H1 (cell line): ENCODE measurements at regions of chr3 and their contacts with region 1.

Region 1: DNA sequence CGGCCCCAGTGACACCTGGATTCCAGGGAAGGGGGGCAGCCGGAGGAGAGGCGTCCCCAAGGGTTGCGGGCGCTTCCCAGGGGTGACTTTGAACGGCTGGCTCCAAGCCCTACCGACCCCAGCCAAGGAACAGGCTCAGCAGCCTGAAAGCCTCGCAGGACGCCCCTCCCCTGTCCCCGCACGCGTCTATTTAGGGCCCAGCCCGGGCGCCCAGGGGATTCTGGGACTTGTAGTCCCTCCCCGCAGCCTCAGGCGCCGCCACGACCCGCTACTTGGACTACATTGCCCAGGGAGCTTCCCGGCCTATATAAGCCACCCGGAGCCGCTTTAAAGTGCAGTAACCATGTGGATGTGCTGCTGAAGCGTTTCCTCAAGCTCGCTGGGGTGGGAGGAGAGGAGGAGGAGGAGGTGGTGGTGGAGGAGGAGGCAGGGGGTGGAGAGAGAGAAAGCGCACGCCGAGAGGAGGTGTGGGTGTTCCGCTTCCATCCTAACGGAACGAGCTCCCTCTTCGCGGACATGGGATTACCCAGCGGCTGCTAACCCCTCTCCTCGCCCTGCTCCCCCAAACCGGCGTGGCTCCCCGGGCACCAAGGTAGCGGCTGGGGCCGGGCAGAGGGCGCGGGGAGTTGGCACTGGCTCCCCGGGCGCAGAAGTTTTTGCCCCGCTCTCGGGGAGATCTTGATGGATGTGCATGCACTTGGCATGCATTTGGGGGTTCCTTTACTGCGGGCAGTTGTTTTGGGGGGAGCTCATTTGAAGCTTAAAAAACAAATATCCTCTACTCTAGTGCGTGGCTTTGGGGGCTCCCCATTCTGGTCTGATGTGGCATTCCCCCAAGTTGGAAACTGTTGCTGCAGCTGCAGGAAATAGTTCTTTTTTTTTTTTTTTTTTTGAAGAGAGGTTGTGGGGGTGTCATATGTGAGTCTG is at the start of gene ITPR1:
- DNase-seq: peak; percentile 98 to 99
- H3K4me3 ChIP-seq: peak within 1 kb of the TSS; percentile 62 to 88 (median 72)
- H3K27ac ChIP-seq: peak within 1 kb of the TSS; percentile 56; the same call in 1 of the 2 replicates
- H3K4me1 ChIP-seq: peaks cover 0 to 3% (median 0%) of the 10 kb centered on the region in 4 experiments; a peak in 3 of 7 replicates
- H3K27me3 ChIP-seq: peaks cover 0 to 11% (median 5%) of the 10 kb centered on the region in 4 experiments; a peak in 5 of 7 replicates
- CTCF ChIP-seq: no peak
- EP300 ChIP-seq: no peak
- POLR2A ChIP-seq: peak; percentile 100
- RAD21 ChIP-seq: no peak
- total RNA-seq, gene ITPR1: 11.5 and 16.3 TPM in 2 replicates

Region 2: DNA sequence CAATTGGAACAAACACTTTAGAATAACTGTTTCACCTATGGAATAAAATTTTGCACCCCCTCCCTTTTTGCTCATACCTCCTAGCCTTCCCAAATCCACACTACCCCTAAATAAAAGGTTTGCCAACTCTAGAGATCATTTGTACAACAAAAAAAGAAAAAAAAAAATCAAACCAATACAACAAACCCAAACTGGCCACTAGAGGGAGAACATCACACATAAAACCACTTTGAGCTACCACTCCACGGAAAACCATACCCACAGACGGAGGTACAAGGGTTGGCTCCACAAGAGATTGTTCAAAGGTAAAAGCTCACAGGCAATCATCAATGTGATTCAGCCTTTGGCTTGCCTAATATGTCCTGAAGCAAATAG is 142.5 kb before region 1 on chr3:
- CTCF ChIA-PET with region 1: interaction called, 34 read pairs
- POLR2A ChIA-PET with region 1: interaction called, 6 read pairs
- DNase-seq: no peak
- H3K4me3 ChIP-seq: no peak overlapping the region
- H3K27ac ChIP-seq: no peak overlapping the region
- H3K4me1 ChIP-seq: no peaks in the 10 kb centered on the region
- H3K27me3 ChIP-seq: no peaks in the 10 kb centered on the region
- CTCF ChIP-seq: peak in 2 of 3 experiments; percentile 58 to 71; a peak in 2 of 4 replicates
- EP300 ChIP-seq: no peak
- POLR2A ChIP-seq: no peak
- RAD21 ChIP-seq: peak; percentile 79 to 82

Region 3: GRCh38 chr3:4373669-4374068 is 119.6 kb before region 1 on chr3:
- CTCF ChIA-PET with region 1: no interaction called
- POLR2A ChIA-PET with region 1: no interaction called
- DNase-seq: no peak
- H3K4me3 ChIP-seq: no peak overlapping the region
- H3K27ac ChIP-seq: no peak overlapping the region
- H3K4me1 ChIP-seq: peaks cover 0 to 3% (median 0%) of the 10 kb centered on the region in 4 experiments; a peak in 1 of 7 replicates
- H3K27me3 ChIP-seq: no peaks in the 10 kb centered on the region
- CTCF ChIP-seq: no peak
- EP300 ChIP-seq: no peak
- POLR2A ChIP-seq: no peak
- RAD21 ChIP-seq: no peak

Region 4: DNA sequence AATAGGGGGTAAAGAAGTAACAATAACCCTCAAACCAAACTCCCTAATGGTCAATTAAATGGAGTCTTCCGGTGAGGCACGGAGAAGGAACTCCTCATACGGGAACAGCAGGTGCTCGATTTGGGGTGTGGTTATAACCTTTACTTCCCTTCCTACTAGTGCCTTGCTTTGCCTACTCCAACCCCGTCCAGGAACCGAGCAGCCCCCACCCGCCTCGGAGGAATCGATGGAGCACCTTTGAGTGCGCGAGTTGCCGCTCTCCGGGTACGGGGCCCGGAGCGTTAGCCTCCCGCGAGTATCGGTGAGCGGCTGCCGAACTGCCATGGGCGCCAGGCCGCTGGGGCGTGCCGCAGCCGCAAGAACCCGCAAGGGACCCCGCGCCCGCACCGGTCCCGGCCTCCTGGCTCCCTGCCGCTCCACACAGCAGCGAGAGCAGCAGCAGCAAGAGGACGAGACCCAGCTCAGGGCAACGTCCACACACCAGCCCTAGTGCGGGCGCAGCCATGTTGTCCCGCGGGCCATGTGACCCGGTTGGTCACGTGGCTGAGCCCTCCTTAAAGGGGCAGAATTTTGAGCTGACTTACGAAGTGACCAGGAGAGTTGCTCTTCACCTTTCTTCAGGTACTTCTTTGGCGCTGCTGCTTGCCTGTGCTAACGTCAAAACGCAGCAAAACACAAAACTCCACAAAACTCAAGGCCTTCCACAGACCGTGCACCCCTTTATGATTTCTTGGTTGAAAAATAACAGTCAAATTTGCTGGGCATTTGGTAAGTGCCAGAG is 26.3 kb before region 1 on chr3 and contains the start of gene SUMF1:
- CTCF ChIA-PET with region 1: interaction called, 4 read pairs
- POLR2A ChIA-PET with region 1: interaction called, 46 read pairs
- DNase-seq: peak; percentile 44 to 88
- H3K4me3 ChIP-seq: peak within 1 kb of the TSS; percentile 86 to 90 (median 87)
- H3K27ac ChIP-seq: peak within 1 kb of the TSS; percentile 85; the same call in 1 of the 2 replicates
- H3K4me1 ChIP-seq: no peaks in the 10 kb centered on the region; a peak in 1 of 7 replicates
- H3K27me3 ChIP-seq: no peaks in the 10 kb centered on the region
- CTCF ChIP-seq: no peak
- EP300 ChIP-seq: peak in 1 of 2 experiments; percentile 62; a peak in 1 of 3 replicates
- POLR2A ChIP-seq: peak; percentile 97 to 98
- RAD21 ChIP-seq: peak in 1 of 2 experiments; percentile 8; a peak in 1 of 4 replicates
- total RNA-seq, gene SUMF1: 10.0 and 12.5 TPM in 2 replicates

Region 5: GRCh38 chr3:4504340-4505261 is 11.3 kb after region 1 on chr3:
- CTCF ChIA-PET with region 1: interaction called, 16 read pairs
- POLR2A ChIA-PET with region 1: interaction called, 91 read pairs
- DNase-seq: no peak
- H3K4me3 ChIP-seq: no peak overlapping the region
- H3K27ac ChIP-seq: no peak overlapping the region
- H3K4me1 ChIP-seq: peaks cover 0 to 4% (median 1%) of the 10 kb centered on the region in 4 experiments; a peak in 2 of 7 replicates
- H3K27me3 ChIP-seq: no peaks in the 10 kb centered on the region
- CTCF ChIP-seq: no peak
- EP300 ChIP-seq: no peak
- POLR2A ChIP-seq: no peak
- RAD21 ChIP-seq: no peak

Region 6: DNA sequence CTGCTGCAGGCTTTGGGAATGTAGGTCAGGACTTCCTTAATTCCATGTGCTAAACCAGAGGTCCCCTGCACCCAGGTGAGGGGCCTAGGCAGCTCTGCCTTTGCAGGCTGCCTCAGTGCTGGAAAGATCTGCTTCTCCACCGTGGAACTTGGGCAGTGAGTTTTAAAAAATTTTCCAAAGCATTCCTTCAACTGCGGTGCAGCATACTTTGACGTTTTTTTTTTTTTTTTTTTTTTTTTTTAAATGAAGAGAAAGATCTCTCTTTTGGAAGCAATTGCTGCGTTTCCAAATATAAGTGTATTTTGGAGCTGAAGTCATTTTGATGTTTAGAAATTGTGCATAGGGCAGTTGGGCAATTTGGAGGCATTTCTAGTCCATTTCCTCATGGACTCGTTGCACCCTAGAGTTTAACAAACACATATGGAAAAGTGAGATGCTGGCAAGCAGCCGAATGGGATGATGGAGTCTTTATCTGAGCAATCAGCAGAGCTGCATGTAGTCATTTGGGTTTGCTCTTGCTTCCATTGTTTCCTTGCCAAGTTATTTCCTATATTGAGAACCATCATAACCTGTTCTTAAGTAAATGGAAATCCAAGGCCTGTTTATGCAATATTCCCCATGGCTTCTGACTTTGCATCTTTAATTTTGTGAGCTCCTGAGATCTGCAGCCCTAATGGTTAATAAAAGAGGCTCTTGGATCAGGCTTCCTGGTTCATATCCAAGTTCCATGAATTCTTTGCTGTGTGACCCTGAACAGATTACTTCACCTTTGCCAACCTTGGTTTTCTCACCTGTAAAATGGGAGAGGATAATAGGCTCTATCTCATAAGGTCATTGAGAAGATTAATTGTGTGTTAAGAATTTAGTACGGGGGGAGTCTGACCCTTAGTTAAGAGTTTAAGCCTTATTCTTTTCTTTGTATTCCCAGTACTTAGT is 31.1 kb after region 1 on chr3:
- CTCF ChIA-PET with region 1: interaction called, 3 read pairs
- POLR2A ChIA-PET with region 1: interaction called, 11 read pairs
- DNase-seq: no peak
- H3K4me3 ChIP-seq: no peak overlapping the region
- H3K27ac ChIP-seq: no peak overlapping the region
- H3K4me1 ChIP-seq: no peaks in the 10 kb centered on the region
- H3K27me3 ChIP-seq: no peaks in the 10 kb centered on the region
- CTCF ChIP-seq: no peak
- EP300 ChIP-seq: no peak
- POLR2A ChIP-seq: no peak
- RAD21 ChIP-seq: no peak

Region 7: DNA sequence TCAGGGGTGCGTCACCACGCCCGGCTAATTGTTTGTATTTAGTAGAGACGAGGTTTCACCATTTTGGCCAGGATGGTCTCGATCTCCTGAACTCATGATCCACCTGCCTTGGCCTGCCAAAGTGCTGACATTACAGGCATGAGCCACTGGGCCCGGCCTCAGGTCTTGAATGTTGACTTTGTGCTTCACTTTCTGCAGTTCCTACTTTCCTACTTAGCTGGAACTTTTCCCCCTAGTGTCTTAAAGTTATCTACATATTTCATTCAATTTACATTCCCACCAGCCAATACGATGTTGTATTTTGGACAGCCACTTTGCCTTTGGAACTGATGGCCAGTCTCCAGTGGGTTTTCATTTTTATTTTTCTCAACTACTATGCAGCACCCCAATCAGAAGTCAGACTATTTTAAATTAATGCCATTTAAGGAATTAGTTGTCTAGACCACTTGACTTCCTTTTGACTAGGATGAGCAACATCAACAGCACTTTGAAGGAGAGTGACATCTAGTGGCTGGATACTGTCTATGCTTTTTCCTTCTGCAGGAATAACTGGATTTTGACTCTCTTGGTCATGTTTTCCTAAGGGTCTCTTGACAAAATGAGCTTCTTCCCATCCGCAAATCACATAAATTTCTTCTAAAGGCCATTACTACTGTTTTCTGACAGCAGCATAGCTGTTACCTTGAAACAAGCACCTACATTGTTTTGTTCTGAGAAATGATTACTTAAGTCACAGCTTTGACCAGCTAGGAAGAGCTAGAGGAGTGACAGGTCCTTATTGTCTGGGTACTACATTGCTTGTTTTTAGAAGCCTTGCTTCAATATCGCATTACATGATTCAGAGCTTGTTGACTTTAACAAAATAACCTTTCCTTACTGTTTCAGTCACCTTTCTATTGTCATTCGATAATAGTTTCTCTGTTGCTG is 140.1 kb after region 1 on chr3:
- CTCF ChIA-PET with region 1: interaction called, 12 read pairs
- POLR2A ChIA-PET with region 1: interaction called, 5 read pairs
- DNase-seq: no peak
- H3K4me3 ChIP-seq: no peak overlapping the region
- H3K27ac ChIP-seq: no peak overlapping the region
- H3K4me1 ChIP-seq: no peaks in the 10 kb centered on the region; a peak in 1 of 7 replicates
- H3K27me3 ChIP-seq: no peaks in the 10 kb centered on the region
- CTCF ChIP-seq: peak in 2 of 3 experiments; percentile 73 to 78; a peak in 3 of 4 replicates
- EP300 ChIP-seq: no peak
- POLR2A ChIP-seq: no peak
- RAD21 ChIP-seq: peak; percentile 87 to 90

Region 8: DNA sequence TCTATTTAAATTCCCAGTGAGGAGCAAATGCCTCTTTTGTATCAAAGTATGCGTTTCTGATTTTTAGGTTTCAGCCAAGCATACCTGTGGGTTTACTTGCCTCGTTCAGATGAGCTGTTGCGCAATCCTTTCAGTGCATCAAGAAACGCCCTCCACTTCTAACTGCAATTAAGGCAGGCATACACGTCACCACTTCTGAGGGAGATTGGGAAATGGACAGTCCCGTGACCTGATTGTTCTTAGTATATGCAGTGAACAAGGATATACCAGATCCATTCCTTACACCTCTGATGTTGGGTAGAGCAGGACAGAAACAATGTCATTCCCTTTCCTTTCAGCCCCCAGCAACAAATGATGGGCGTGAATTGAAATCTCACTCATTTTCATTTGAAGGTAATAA is 218.9 kb after region 1 on chr3:
- CTCF ChIA-PET with region 1: no interaction called
- POLR2A ChIA-PET with region 1: no interaction called
- DNase-seq: no peak
- H3K4me3 ChIP-seq: no peak overlapping the region
- H3K27ac ChIP-seq: no peak overlapping the region
- H3K4me1 ChIP-seq: peaks cover 0 to 13% (median 8%) of the 10 kb centered on the region in 4 experiments; a peak in 5 of 7 replicates
- H3K27me3 ChIP-seq: no peaks in the 10 kb centered on the region
- CTCF ChIP-seq: no peak
- EP300 ChIP-seq: no peak
- POLR2A ChIP-seq: no peak
- RAD21 ChIP-seq: no peak